ENCODE measurements at regions of chr22 and their contacts with region 1.

Region 1: DNA sequence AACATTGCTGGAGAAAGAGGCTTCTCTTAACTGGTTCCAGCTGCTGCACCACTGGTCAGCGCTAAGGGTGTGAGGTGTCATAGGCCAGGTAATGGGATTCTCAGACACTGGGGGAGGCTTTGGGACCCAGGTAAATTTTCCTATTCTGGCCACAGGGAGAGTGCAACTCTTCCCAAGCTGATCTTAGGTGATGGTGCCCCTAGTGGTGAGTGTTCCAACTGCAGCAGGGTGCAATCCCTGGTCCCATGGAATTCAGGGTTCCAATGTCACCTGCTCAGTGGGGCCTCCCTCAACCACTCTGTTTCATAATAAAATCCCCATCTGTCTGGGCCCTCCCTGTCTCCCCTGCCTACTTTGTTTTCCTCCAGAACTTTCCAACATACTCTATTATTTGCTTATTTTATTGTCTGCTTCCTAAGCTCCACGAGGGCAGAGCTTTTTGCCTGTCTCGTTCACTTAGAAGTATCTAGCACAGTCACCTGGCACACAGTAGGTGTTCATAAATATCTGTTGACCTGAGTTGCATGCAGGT is 2.9 kb upstream of the SGSM1 start:
- DNase-seq: no peak
- H3K4me3 ChIP-seq: no peak overlapping the region
- H3K27me3 ChIP-seq: peaks cover 3% of the 10 kb centered on the region
- CTCF ChIP-seq: peak; percentile 94

Region 2: GRCh38 chr22:24789516-24789915 is 13.6 kb before region 1 on chr22:
- CTCF ChIA-PET with region 1: interaction called, 16 read pairs
- POLR2A ChIA-PET with region 1: no interaction called
- DNase-seq: no peak
- H3K4me3 ChIP-seq: no peak overlapping the region
- H3K27me3 ChIP-seq: no peaks in the 10 kb centered on the region
- CTCF ChIP-seq: no peak

Region 3: GRCh38 chr22:24816806-24817205 is 13.7 kb after region 1 on chr22:
- CTCF ChIA-PET with region 1: interaction called, 15 read pairs
- POLR2A ChIA-PET with region 1: no interaction called
- DNase-seq: no peak
- H3K4me3 ChIP-seq: no peak overlapping the region
- H3K27me3 ChIP-seq: no peaks in the 10 kb centered on the region
- CTCF ChIP-seq: no peak

Region 4: DNA sequence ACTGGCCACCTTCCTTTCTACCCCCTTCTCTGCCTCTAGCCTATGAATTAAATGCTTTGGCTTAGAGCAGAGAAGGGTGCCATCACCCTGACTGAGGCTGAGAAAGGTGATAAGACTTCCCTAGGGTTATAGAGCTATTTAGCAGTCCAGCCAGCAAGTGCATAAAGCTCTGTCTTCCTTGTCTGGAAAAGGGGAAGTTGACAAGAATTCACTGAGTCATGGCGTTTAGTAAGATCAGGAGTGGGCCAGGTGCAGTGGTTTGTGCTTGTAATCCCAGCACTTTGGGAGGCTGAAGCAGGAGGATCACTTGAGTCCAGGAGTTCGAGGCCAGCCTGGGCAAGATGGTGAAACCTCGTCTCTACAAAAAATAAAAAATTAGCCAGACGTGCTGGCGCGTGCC is 80.4 kb after region 1 on chr22:
- CTCF ChIA-PET with region 1: no interaction called
- POLR2A ChIA-PET with region 1: no interaction called
- DNase-seq: no peak
- H3K4me3 ChIP-seq: no peak overlapping the region
- H3K27me3 ChIP-seq: no peaks in the 10 kb centered on the region
- CTCF ChIP-seq: no peak

Region 5: DNA sequence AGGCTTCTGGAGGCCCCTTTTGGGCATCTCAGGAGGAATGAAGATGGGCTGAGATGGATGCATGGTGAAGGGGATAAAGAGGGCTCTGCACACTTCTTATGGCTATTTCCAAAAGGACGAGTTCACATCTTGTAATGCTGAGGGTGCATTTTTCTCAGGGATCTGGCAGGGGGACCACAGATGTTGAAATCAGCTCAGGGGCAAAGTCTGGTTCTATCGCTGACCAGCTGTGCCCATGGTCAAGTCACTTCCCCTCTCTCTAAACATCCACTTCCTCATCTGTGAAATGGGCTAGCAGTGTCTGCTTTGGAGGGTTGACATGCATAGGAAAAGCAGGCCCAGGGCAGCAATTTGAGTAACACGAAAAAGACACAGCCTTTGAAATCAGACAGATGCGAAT is 117.0 kb after region 1 on chr22:
- CTCF ChIA-PET with region 1: no interaction called
- POLR2A ChIA-PET with region 1: no interaction called
- DNase-seq: no peak
- H3K4me3 ChIP-seq: no peak overlapping the region
- H3K27me3 ChIP-seq: no peaks in the 10 kb centered on the region
- CTCF ChIP-seq: no peak

Region 6: DNA sequence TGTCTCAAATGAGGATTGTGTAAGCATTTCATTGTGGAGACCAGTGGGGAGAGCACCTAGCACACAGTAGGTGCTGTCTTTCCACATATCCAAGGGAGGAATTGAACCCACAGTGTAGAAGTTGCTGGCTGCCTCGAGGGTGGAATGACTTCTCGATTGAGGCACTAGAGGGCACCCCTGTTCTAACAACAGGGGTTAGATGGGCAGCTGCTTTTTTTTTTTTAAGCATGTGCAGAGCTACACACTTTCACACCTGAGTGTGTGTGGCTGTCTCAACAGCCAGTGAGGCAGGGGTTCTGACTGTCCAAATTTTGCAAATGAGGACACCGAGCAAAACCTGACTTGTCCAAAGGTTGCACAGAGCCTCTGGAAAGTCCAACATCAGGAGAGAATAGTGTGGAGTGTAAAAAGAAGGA is 278.3 kb after region 1 on chr22:
- CTCF ChIA-PET with region 1: no interaction called
- POLR2A ChIA-PET with region 1: no interaction called
- DNase-seq: no peak
- H3K4me3 ChIP-seq: no peak overlapping the region
- H3K27me3 ChIP-seq: no peaks in the 10 kb centered on the region
- CTCF ChIP-seq: peak; percentile 49